Activated naive CD4-positive, alpha-beta T cell treated with anti-CD3 and anti-CD28 coated beads for 36 hours (primary cell): ENCODE measurements at regions of chr3 and their contacts with region 1.

Region 1: DNA sequence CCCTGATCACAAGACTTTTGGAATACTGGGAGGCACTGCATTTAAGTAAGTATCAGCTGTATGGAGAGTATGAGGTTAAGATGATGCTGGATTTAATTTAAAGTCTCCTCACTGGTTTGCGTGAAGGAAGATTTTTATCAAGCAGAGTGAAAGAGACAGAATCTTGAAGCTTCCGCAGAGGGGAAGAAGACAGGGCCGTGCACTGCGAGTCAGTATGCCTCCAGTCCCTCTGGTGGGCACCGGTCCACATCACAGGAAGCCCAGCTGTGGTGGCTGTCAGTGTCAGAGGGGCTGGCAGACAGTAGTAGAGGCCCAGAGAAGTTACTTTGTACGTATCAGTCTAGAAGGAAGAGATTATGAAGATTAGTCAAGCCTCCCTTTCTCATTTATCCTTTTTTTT is 379.0 kb upstream of the TPRG1 start:
- DNase-seq: no peak
- H3K4me3 Mint-ChIP-seq: no peak overlapping the region
- H3K27ac Mint-ChIP-seq: no peak overlapping the region
- H3K4me1 Mint-ChIP-seq: peaks cover 3% of the 10 kb centered on the region
- H3K27me3 Mint-ChIP-seq: no peaks in the 10 kb centered on the region

Region 2: DNA sequence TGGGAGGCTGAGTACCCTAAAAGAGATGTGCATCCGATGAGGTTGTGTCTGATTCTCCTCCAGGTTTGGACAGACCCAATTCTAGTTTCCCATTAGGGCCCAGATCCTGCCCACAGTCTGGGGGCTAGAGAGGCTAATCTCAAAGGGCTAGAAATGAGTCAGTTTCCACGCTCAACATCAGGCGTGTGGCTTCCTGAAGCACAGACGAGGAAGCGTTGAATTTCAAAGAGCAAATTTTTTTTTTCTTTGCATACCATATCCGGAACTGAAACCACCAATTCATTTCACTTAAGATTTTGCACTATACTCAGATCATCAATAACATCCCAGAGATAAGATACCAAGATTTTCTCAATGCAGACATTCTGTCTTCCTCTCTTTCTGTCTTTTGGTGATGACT is 873.7 kb before region 1 on chr3:
- CTCF ChIA-PET with region 1: no interaction called
- intact Hi-C with region 1: loop called (anchors 1 kb)
- DNase-seq: peak; percentile 77
- H3K4me3 Mint-ChIP-seq: peak overlapping the region; percentile 60
- H3K27ac Mint-ChIP-seq: peak overlapping the region; percentile 94
- H3K4me1 Mint-ChIP-seq: peaks cover 83% of the 10 kb centered on the region
- H3K27me3 Mint-ChIP-seq: no peaks in the 10 kb centered on the region

Region 3: DNA sequence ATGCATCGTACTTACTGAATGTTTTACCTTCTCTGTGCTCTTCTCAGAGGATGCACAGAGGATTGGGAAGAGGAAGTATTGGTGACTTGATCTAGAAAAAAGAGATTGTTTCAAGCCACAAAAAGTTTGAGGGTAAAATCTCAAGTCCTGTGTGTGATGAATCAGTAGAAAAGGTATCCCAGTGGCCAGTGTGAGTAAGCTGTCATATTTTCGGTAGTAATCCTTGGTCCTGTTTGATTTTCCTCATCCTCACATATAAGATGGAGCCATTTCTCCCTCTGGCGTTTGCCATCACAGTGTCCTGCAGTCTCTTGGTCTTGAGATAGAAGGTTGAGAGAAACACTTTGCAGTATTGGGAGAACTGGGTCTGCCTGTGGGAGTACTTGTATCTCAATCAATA is 472.0 kb before region 1 on chr3:
- CTCF ChIA-PET with region 1: no interaction called
- intact Hi-C with region 1: loop called (anchors 1 kb)
- DNase-seq: no peak
- H3K4me3 Mint-ChIP-seq: no peak overlapping the region
- H3K27ac Mint-ChIP-seq: no peak overlapping the region
- H3K4me1 Mint-ChIP-seq: peaks cover 49% of the 10 kb centered on the region
- H3K27me3 Mint-ChIP-seq: no peaks in the 10 kb centered on the region

Region 4: DNA sequence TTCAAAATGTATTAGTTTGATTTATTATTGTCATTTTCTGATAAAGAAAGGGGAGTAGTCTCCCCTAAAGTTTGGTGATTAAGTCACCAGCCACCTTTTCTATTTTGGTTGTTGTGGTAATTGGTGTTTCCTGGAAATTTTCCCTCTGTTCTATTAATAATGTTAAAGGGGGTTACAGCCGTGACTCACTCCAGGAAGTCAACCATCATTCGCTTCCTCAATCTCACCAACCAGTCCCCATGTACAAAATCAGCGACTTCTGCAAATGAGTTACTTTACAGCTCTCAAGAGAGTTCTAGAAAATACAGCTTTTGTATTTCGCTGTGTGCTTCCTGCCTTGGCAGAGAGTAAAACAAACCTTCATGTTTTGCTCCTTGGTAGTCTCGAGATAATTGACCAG is 353.7 kb before region 1 on chr3:
- CTCF ChIA-PET with region 1: no interaction called
- intact Hi-C with region 1: loop called (anchors 2 kb)
- DNase-seq: peak; percentile 51
- H3K4me3 Mint-ChIP-seq: no peak overlapping the region
- H3K27ac Mint-ChIP-seq: peak overlapping the region; percentile 61
- H3K4me1 Mint-ChIP-seq: peaks cover 38% of the 10 kb centered on the region
- H3K27me3 Mint-ChIP-seq: no peaks in the 10 kb centered on the region

Region 5: GRCh38 chr3:188749010-188749617 is 43.7 kb before region 1 on chr3:
- CTCF ChIA-PET with region 1: interaction called, 12 read pairs
- intact Hi-C with region 1: loop called (anchors 1 kb)
- DNase-seq: peak; percentile 66
- H3K4me3 Mint-ChIP-seq: no peak overlapping the region
- H3K27ac Mint-ChIP-seq: no peak overlapping the region
- H3K4me1 Mint-ChIP-seq: peaks cover 29% of the 10 kb centered on the region
- H3K27me3 Mint-ChIP-seq: no peaks in the 10 kb centered on the region

Region 6: GRCh38 chr3:189049438-189050236 is 256.8 kb after region 1 on chr3:
- CTCF ChIA-PET with region 1: no interaction called
- intact Hi-C with region 1: loop called (anchors 2 kb)
- DNase-seq: peak; percentile 33
- H3K4me3 Mint-ChIP-seq: no peak overlapping the region
- H3K27ac Mint-ChIP-seq: no peak overlapping the region
- H3K4me1 Mint-ChIP-seq: peaks cover 8% of the 10 kb centered on the region
- H3K27me3 Mint-ChIP-seq: peaks cover 24% of the 10 kb centered on the region